ENCODE measurements at regions of chr1 and their contacts with region 1.

Region 1: GRCh38 chr1:63442141-63442475 is 74.7 kb downstream of the ALG6 start:
- DNase-seq: no peak
- ATAC-seq: no peak; a peak in 2 of 6 replicates
- H3K4me3 ChIP-seq: no peak overlapping the region
- H3K27ac ChIP-seq: no peak overlapping the region
- H3K4me1 ChIP-seq: no peaks in the 10 kb centered on the region
- CTCF ChIP-seq: no peak
- EP300 ChIP-seq: no peak
- POLR2A ChIP-seq: no peak
- RAD21 ChIP-seq: no peak

Region 2: DNA sequence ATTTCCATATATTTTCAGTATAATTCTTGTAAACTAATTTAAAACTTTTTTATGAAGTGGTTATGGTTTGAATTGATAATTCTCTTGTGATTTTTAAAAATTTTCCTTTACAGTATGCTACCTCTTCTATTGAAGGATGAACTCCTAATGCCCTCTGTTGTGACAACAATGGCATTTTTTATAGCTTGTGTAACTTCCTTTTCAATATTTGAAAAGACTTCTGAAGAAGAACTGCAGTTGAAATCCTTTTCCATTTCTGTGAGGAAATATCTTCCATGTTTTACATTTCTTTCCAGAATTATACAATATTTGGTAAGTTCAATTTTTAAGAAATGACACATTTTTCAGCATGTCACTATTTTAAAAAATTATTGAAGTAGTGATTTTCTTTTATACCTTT is 13.3 kb before region 1 on chr1:
- CTCF ChIA-PET with region 1: interaction called, 11 read pairs
- POLR2A ChIA-PET with region 1: no interaction called
- DNase-seq: no peak
- ATAC-seq: no peak
- H3K4me3 ChIP-seq: no peak overlapping the region
- H3K27ac ChIP-seq: no peak overlapping the region
- H3K4me1 ChIP-seq: no peaks in the 10 kb centered on the region
- CTCF ChIP-seq: no peak
- EP300 ChIP-seq: no peak
- POLR2A ChIP-seq: no peak
- RAD21 ChIP-seq: no peak

Region 3: GRCh38 chr1:63453232-63453631 is 11.1 kb after region 1 on chr1:
- CTCF ChIA-PET with region 1: interaction called, 10 read pairs
- POLR2A ChIA-PET with region 1: no interaction called
- DNase-seq: no peak
- ATAC-seq: no peak
- H3K4me3 ChIP-seq: no peak overlapping the region
- H3K27ac ChIP-seq: no peak overlapping the region
- H3K4me1 ChIP-seq: no peaks in the 10 kb centered on the region
- CTCF ChIP-seq: no peak
- EP300 ChIP-seq: no peak
- POLR2A ChIP-seq: no peak
- RAD21 ChIP-seq: no peak

Region 4: DNA sequence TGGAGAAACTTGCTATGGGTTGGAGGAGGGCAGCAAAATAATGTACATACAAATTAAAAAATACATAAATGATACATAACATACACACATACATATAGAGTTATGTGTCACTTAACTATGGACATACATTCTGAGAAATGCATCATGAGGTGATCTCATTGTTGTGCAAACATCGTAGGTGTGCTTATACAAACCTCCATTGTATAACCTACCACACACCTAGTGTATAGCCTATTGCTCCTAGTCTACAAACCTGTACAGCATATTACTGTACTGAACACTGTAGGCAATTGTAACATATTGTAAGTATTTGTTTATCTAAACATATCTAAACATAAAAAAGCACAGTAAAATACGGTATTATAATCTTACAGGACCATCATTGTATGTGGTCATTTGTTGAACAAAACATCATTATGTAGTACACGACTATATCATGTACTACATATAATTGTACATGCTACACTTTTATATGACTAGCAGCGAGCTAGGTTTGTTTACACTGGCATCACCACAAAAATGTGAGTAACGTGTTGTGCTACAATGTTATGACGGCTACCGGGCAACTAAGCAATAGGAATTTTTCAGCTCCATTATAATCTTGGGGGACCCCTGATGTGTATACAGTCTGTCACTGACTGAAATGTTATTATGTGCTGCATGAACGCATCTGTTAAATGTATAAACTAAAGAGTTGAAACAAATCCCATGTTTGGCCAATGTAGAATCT is 45.4 kb after region 1 on chr1:
- CTCF ChIA-PET with region 1: no interaction called
- POLR2A ChIA-PET with region 1: no interaction called
- DNase-seq: no peak
- ATAC-seq: no peak
- H3K4me3 ChIP-seq: no peak overlapping the region
- H3K27ac ChIP-seq: no peak overlapping the region
- H3K4me1 ChIP-seq: no peaks in the 10 kb centered on the region
- CTCF ChIP-seq: no peak
- EP300 ChIP-seq: no peak
- POLR2A ChIP-seq: no peak
- RAD21 ChIP-seq: no peak

Measured in A549 (cell line).